ENCODE measurements at regions of chr12 and their contacts with region 1.

Region 1: GRCh38 chr12:116194935-116195431 is 82.5 kb downstream of the MED13L start:
- DNase-seq: no peak
- ATAC-seq: peak in 2 of 8 donors; percentile 14 to 15
- H3K4me3 ChIP-seq: no peak overlapping the region
- H3K27ac ChIP-seq: no peak overlapping the region
- H3K4me1 ChIP-seq: peaks cover 0 to 71% (median 62%) of the 10 kb centered on the region in 9 donors
- H3K27me3 ChIP-seq: no peaks in the 10 kb centered on the region
- CTCF ChIP-seq: no peak

Region 2: DNA sequence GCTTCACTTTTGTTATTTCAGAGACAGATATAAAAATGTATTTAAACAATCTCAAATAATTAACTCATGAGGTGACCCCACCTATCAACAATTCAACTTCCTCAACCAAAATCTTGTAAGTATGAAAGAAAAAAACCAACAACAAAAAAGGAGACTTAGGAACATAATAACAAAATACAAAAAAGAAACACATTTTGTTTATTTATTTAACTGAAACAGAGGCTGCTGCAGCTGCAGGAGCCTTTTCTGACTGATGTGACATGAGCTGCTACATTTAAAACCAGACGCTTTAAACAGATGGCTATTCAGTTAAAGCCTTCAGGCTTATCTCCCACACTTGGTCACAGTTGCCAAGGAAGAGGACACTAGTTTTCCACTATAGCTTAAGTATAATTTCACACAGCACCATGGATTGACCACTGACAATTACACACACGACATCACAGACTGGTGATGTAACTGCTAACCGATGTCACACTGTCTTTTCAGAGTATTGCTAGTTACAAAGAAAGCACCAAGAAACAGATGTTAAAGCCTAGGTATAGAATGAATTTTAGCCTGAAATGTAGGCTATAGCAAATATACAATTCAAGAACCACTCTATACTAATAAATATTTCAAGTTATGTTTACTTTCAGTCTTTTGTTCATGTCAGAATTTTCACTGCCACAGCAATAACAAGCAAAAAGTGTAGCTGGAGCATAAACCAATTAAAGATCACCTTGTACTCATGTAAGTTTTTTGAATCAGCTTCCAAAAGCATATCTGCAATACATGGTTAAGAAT is 30.5 kb before region 1 on chr12:
- intact Hi-C with region 1: loop called in 1 of 10 experiments (anchors 5 kb)
- DNase-seq: no peak
- ATAC-seq: peak in 7 of 8 donors; percentile 35 to 61 (median 45)
- H3K4me3 ChIP-seq: no peak overlapping the region
- H3K27ac ChIP-seq: peak overlapping the region in 5 of 10 donors; percentile 10 to 47 (median 32)
- H3K4me1 ChIP-seq: peaks cover 8 to 81% (median 56%) of the 10 kb centered on the region in 9 donors
- H3K27me3 ChIP-seq: no peaks in the 10 kb centered on the region
- CTCF ChIP-seq: no peak

Measured in heart right ventricle (tissue), 16 donors.